A549 (cell line): ENCODE measurements at regions of chr9 and their contacts with region 1.

Region 1: GRCh38 chr9:69919461-69920061 is 98.9 kb downstream of the CFAP95 start:
- DNase-seq: peak; percentile 42 to 59
- ATAC-seq: peak; percentile 91 to 97
- H3K4me3 ChIP-seq: no peak overlapping the region
- H3K27ac ChIP-seq: no peak overlapping the region
- H3K4me1 ChIP-seq: no peaks in the 10 kb centered on the region
- CTCF ChIP-seq: peak; percentile 83
- EP300 ChIP-seq: no peak
- POLR2A ChIP-seq: no peak
- RAD21 ChIP-seq: peak; percentile 78 to 80

Region 2: GRCh38 chr9:69745716-69746437 is 173.7 kb before region 1 on chr9:
- CTCF ChIA-PET with region 1: interaction called, 21 read pairs
- POLR2A ChIA-PET with region 1: no interaction called
- DNase-seq: peak in 1 of 2 experiments; percentile 53
- ATAC-seq: peak; percentile 89 to 91; a peak in 5 of 6 replicates
- H3K4me3 ChIP-seq: no peak overlapping the region
- H3K27ac ChIP-seq: peak overlapping the region; percentile 23 to 59; a peak in 5 of 6 replicates
- H3K4me1 ChIP-seq: peaks cover 38% of the 10 kb centered on the region
- CTCF ChIP-seq: peak; percentile 47
- EP300 ChIP-seq: no peak
- POLR2A ChIP-seq: no peak
- RAD21 ChIP-seq: peak; percentile 56 to 61

Region 3: GRCh38 chr9:69877854-69878514 is 41.6 kb before region 1 on chr9:
- CTCF ChIA-PET with region 1: interaction called, 12 read pairs
- POLR2A ChIA-PET with region 1: no interaction called
- DNase-seq: peak; percentile 28 to 50
- ATAC-seq: peak; percentile 74 to 82; a peak in 5 of 6 replicates
- H3K4me3 ChIP-seq: no peak overlapping the region
- H3K27ac ChIP-seq: peak overlapping the region in 1 of 2 experiments; percentile 22; a peak in 1 of 6 replicates
- H3K4me1 ChIP-seq: no peaks in the 10 kb centered on the region
- CTCF ChIP-seq: peak; percentile 73
- EP300 ChIP-seq: no peak
- POLR2A ChIP-seq: no peak
- RAD21 ChIP-seq: peak; percentile 84 to 85

Region 4: DNA sequence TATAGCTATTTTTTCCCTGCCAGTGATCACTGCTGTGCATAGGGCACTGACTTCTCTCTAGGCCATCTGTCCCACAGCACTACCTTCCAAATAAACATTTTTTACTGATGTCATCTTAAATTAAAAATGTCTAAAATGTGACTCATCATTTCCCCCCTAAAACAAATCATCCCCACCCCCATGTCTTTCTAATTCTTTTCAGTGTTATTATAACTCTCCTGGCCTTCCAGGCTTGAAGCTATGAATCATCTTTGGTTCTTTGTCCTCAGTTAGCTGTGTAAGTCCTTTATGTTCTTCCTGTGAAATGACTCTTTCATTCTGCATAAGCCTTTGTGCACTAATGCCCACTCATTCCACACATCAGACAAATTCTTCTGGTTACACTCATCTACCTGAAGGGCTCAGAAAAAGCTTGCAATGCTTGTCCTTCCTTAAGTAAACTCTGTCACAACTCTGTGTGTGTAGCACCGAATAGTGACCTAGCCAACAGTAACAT is 20.8 kb before region 1 on chr9:
- CTCF ChIA-PET with region 1: interaction called, 22 read pairs
- POLR2A ChIA-PET with region 1: no interaction called
- DNase-seq: peak in 1 of 2 experiments; percentile 59
- ATAC-seq: peak; percentile 63 to 81; a peak in 5 of 6 replicates
- H3K4me3 ChIP-seq: no peak overlapping the region
- H3K27ac ChIP-seq: peak overlapping the region; percentile 69 to 74
- H3K4me1 ChIP-seq: peaks cover 50% of the 10 kb centered on the region
- CTCF ChIP-seq: no peak
- EP300 ChIP-seq: peak in 1 of 2 experiments; percentile 33; a peak in 2 of 5 replicates
- POLR2A ChIP-seq: no peak
- RAD21 ChIP-seq: no peak

Region 5: DNA sequence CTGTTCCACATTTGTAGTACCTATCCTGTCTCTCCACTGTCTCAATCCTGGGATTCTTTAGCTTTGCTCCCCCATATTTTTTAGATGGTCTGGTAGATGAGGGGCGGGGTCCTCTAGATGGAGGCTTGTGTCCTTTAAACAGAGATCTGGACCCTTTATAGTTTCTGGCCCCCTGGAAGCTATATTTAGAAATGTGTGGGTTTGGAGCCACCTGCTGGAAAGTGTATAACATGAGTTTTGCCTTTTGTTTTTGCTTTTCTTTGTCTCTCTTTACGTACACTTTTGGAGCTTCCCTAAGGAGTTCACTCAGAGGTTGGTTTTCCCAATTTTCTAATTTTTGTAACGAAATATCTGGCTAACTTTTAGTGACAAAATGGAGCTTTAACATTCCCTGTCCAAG is 11.8 kb after region 1 on chr9:
- CTCF ChIA-PET with region 1: interaction called, 29 read pairs
- POLR2A ChIA-PET with region 1: no interaction called
- DNase-seq: no peak
- ATAC-seq: peak; percentile 57 to 60; a peak in 2 of 6 replicates
- H3K4me3 ChIP-seq: no peak overlapping the region
- H3K27ac ChIP-seq: no peak overlapping the region
- H3K4me1 ChIP-seq: no peaks in the 10 kb centered on the region
- CTCF ChIP-seq: peak; percentile 64
- EP300 ChIP-seq: no peak
- POLR2A ChIP-seq: no peak
- RAD21 ChIP-seq: peak; percentile 72 to 73